ENCODE measurements at regions of chr6 and their contacts with region 1.

Region 1: GRCh38 chr6:111061508-111061907 is 25.8 kb upstream of the SLC16A10 start:
- DNase-seq: no peak
- ATAC-seq: no peak
- H3K4me3 ChIP-seq: no peak overlapping the region
- H3K27ac ChIP-seq: no peak overlapping the region
- H3K4me1 ChIP-seq: no peaks in the 10 kb centered on the region
- H3K27me3 ChIP-seq: no peaks in the 10 kb centered on the region
- CTCF ChIP-seq: no peak

Region 2: GRCh38 chr6:110468731-110469130 is 592.8 kb before region 1 on chr6:
- intact Hi-C with region 1: no loop called
- DNase-seq: no peak
- ATAC-seq: no peak
- H3K4me3 ChIP-seq: no peak overlapping the region
- H3K27ac ChIP-seq: no peak overlapping the region
- H3K4me1 ChIP-seq: no peaks in the 10 kb centered on the region
- H3K27me3 ChIP-seq: no peaks in the 10 kb centered on the region
- CTCF ChIP-seq: no peak

Region 3: GRCh38 chr6:111210194-111210728 is 148.8 kb after region 1 on chr6:
- intact Hi-C with region 1: loop called in 1 of 2 experiments (anchors 5 kb)
- DNase-seq: peak in 2 of 4 donors; percentile 35 to 58
- ATAC-seq: peak; percentile 91
- H3K4me3 ChIP-seq: no peak overlapping the region
- H3K27ac ChIP-seq: no peak overlapping the region
- H3K4me1 ChIP-seq: no peaks in the 10 kb centered on the region
- H3K27me3 ChIP-seq: no peaks in the 10 kb centered on the region
- CTCF ChIP-seq: peak; percentile 62 to 64